ENCODE measurements at regions of chr20 and their contacts with region 1.

Region 1: DNA sequence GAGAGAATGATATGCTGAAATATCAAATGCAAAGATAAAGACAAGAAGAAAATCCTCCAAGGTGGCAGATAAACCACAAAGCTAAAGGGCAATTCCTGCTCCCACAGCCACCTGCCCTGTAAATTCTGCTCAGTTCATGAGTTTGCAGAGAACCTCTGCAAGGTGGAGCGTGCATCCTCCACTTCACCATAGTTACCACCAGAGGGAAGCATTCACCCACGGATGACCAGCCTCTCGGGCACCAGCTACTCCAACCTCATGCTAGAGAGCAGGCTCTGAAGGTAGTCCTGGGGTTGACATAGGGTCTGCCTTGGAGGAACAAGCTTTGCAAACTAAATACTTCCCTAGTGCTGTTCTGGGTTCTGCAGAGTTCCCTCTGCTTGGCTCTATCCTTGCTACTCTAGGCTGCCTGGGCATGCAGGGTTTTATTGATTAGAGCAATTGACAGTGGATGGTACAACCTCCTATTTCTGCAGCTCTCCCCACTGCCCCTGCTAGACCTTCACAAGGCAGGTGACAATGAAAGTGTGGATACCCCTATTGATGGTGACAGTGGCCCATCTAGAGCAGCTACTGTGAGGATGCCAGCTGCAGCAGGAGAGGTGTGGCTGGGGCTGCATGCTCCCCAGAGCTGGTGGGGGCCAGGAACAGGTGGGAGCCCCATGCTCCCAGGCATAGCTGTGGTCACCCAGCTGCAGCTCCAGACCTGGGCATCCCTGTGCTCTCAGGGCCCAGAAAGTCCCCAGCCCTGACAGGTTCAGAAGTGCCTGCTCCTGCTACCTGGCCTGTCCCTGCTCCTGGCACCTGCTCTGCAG is 51.1 kb downstream of the GGTLC1 start:
- DNase-seq: peak; percentile 41 to 66
- H3K4me3 ChIP-seq: no peak overlapping the region
- H3K27ac ChIP-seq: no peak overlapping the region
- H3K4me1 ChIP-seq: no peaks in the 10 kb centered on the region
- H3K27me3 ChIP-seq: no peaks in the 10 kb centered on the region
- CTCF ChIP-seq: peak; percentile 78 to 92 (median 91)
- EP300 ChIP-seq: no peak
- POLR2A ChIP-seq: no peak
- RAD21 ChIP-seq: peak; percentile 98 to 99

Region 2: GRCh38 chr20:23484081-23484480 is 453.4 kb before region 1 on chr20:
- CTCF ChIA-PET with region 1: no interaction called
- POLR2A ChIA-PET with region 1: no interaction called
- DNase-seq: no peak
- H3K4me3 ChIP-seq: no peak overlapping the region
- H3K27ac ChIP-seq: no peak overlapping the region
- H3K4me1 ChIP-seq: peaks cover 0 to 5% (median 0%) of the 10 kb centered on the region in 4 experiments; a peak in 1 of 7 replicates
- H3K27me3 ChIP-seq: no peaks in the 10 kb centered on the region; a peak in 1 of 7 replicates
- CTCF ChIP-seq: no peak
- EP300 ChIP-seq: no peak
- POLR2A ChIP-seq: no peak
- RAD21 ChIP-seq: no peak

Region 3: DNA sequence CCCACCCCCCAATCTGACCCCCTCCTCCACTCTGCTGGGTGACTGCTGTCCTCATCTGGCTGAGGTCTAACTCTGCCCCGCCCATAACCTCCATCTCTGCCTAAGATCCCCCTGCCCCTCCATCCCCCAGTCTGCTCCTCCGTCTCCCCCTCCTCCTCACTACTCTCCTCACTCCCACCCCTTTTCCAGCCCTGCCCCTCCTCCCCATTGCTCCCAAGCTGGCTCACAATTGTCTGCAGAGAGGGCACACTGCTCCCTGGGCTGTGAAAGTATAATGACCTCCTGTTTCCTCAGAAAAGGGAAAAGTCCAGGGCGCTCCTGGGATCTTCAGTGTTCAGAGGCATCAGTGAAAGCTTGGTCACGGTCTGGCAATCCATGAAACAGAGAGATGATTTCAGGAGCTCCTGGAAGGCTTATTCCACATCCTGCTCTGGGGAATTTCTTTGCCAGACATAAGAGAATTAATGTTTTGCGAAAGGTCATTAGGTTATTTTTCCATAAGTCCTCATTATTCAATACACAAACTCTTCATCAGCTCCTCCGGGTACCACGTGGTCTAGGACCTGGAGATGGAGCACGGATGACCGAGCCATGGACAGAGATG is 79.4 kb before region 1 on chr20:
- CTCF ChIA-PET with region 1: no interaction called
- POLR2A ChIA-PET with region 1: no interaction called
- DNase-seq: no peak
- H3K4me3 ChIP-seq: 0 out of 8 replicates have a peak overlapping the region, but pooled peaks of 1 of the 4 experiments have one; percentile 11
- H3K27ac ChIP-seq: no peak overlapping the region
- H3K4me1 ChIP-seq: peaks cover 0 to 4% (median 0%) of the 10 kb centered on the region in 4 experiments; a peak in 1 of 7 replicates
- H3K27me3 ChIP-seq: no peaks in the 10 kb centered on the region
- CTCF ChIP-seq: no peak
- EP300 ChIP-seq: no peak
- POLR2A ChIP-seq: no peak
- RAD21 ChIP-seq: no peak

Region 4: GRCh38 chr20:23926976-23927872 is 10.3 kb before region 1 on chr20:
- CTCF ChIA-PET with region 1: interaction called, 24 read pairs
- POLR2A ChIA-PET with region 1: interaction called, 3 read pairs
- DNase-seq: no peak
- H3K4me3 ChIP-seq: no peak overlapping the region
- H3K27ac ChIP-seq: no peak overlapping the region
- H3K4me1 ChIP-seq: peaks cover 0 to 4% (median 0%) of the 10 kb centered on the region in 4 experiments; a peak in 1 of 7 replicates
- H3K27me3 ChIP-seq: no peaks in the 10 kb centered on the region
- CTCF ChIP-seq: no peak
- EP300 ChIP-seq: no peak
- POLR2A ChIP-seq: no peak
- RAD21 ChIP-seq: no peak

Region 5: GRCh38 chr20:23970049-23970448 is 32.5 kb after region 1 on chr20:
- CTCF ChIA-PET with region 1: interaction called, 10 read pairs
- POLR2A ChIA-PET with region 1: no interaction called
- DNase-seq: peak in 1 of 2 experiments; percentile 22
- H3K4me3 ChIP-seq: no peak overlapping the region
- H3K27ac ChIP-seq: no peak overlapping the region
- H3K4me1 ChIP-seq: peaks cover 0 to 2% (median 1%) of the 10 kb centered on the region in 4 experiments; a peak in 2 of 7 replicates
- H3K27me3 ChIP-seq: no peaks in the 10 kb centered on the region; a peak in 1 of 7 replicates
- CTCF ChIP-seq: no peak
- EP300 ChIP-seq: no peak
- POLR2A ChIP-seq: no peak
- RAD21 ChIP-seq: no peak

Region 6: GRCh38 chr20:24100385-24101011 is 163.0 kb after region 1 on chr20:
- CTCF ChIA-PET with region 1: interaction called, 13 read pairs
- POLR2A ChIA-PET with region 1: no interaction called
- DNase-seq: no peak
- H3K4me3 ChIP-seq: no peak overlapping the region
- H3K27ac ChIP-seq: no peak overlapping the region
- H3K4me1 ChIP-seq: no peaks in the 10 kb centered on the region
- H3K27me3 ChIP-seq: 0 out of 7 replicates have a peak, but pooled peaks cover 0 to 2% (median 0%) of the 10 kb centered on the region in 4 experiments
- CTCF ChIP-seq: peak; percentile 41 to 77 (median 66)
- EP300 ChIP-seq: no peak
- POLR2A ChIP-seq: no peak
- RAD21 ChIP-seq: peak; percentile 59 to 72

Region 7: DNA sequence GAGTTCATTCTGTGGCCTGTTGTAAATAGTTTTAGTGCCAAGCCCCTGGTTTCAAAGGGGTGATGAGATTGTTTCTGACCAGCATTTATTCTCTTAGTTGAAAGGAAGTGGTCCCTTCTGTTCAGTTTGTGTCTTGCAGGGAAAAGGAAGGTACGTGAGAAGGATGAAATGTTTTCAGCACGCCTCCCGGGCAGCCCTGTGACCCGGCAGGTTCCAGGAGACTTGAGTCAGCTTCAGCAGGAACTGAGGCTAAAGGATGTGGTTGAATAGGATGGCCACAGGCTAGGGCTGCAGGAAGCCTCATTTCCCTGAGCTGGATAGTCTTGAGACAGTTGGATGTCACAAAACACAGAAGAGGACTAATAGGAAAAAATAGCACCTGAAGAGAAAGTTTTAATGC is 399.6 kb after region 1 on chr20:
- CTCF ChIA-PET with region 1: no interaction called
- POLR2A ChIA-PET with region 1: no interaction called
- DNase-seq: no peak
- H3K4me3 ChIP-seq: no peak overlapping the region
- H3K27ac ChIP-seq: no peak overlapping the region
- H3K4me1 ChIP-seq: no peaks in the 10 kb centered on the region
- H3K27me3 ChIP-seq: no peaks in the 10 kb centered on the region
- CTCF ChIP-seq: no peak
- EP300 ChIP-seq: no peak
- POLR2A ChIP-seq: no peak
- RAD21 ChIP-seq: no peak